Activated naive CD4-positive, alpha-beta T cell treated with anti-CD3 and anti-CD28 coated beads for 36 hours (primary cell): ENCODE measurements at regions of chr1 and their contacts with region 1.

Region 1: GRCh38 chr1:156500797-156501499 is 373 bp upstream of the MEF2D start:
- DNase-seq: peak; percentile 93
- H3K4me3 Mint-ChIP-seq: peak overlapping the region; percentile 89
- H3K27ac Mint-ChIP-seq: peak overlapping the region; percentile 97
- H3K4me1 Mint-ChIP-seq: peaks cover 75% of the 10 kb centered on the region
- H3K27me3 Mint-ChIP-seq: no peaks in the 10 kb centered on the region

Region 2: GRCh38 chr1:156114101-156114916 is 386.6 kb before region 1 on chr1 and contains the start of gene LMNA:
- CTCF ChIA-PET with region 1: no interaction called
- intact Hi-C with region 1: loop called (anchors 2 kb)
- DNase-seq: peak; percentile 91
- H3K4me3 Mint-ChIP-seq: peak within 1 kb of the TSS; percentile 86
- H3K27ac Mint-ChIP-seq: peak within 1 kb of the TSS; percentile 50
- H3K4me1 Mint-ChIP-seq: peaks cover 32% of the 10 kb centered on the region
- H3K27me3 Mint-ChIP-seq: peaks cover 22% of the 10 kb centered on the region
- total RNA-seq, gene LMNA: 62.1 to 62.6 TPM

Region 3: DNA sequence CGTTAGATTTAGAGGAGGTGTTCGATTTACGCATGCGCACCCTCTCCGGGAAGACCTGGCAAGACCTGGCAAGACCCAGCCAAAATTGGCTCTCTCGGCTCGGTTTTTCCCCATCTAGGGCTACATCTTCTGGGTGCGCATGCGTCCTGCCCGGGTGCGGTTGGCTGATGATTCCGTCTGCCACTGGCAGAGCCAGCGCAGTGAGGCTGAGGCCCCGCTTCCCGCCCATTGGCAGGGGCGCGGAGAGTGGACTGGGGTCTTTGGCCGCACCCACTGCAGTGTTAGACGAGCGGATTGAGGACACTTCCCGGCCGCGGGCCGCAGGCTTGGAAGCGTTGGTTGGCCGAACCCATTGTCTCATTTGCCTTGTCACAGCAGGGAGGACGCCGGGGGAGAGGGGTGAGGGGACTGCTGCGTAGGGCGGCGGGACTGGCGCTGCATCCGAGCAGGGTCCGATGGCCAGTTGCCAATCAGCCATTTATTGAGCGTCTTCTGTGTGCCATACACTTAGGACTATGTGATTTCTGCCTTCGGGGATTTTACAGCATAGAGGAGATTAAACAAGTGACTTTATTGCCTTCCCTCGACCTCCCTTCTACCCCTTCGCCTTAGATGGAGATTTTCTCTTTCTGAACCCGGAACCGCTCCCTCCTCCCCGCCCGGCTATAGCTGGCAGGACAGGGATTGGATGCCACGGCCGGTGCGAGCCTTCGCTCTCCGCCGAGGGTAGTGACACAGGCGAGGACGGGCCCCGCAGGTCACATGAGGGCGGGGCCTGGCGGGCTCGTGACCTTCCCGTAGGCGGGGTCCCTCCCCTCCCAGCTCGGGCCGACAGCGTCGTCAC is 44.1 kb before region 1 on chr1:
- CTCF ChIA-PET with region 1: interaction called, 10 read pairs
- intact Hi-C with region 1: loop called (anchors 1 kb)
- DNase-seq: peak; percentile 100
- H3K4me3 Mint-ChIP-seq: peak overlapping the region; percentile 86
- H3K27ac Mint-ChIP-seq: peak overlapping the region; percentile 97
- H3K4me1 Mint-ChIP-seq: peaks cover 10% of the 10 kb centered on the region
- H3K27me3 Mint-ChIP-seq: no peaks in the 10 kb centered on the region

Region 4: DNA sequence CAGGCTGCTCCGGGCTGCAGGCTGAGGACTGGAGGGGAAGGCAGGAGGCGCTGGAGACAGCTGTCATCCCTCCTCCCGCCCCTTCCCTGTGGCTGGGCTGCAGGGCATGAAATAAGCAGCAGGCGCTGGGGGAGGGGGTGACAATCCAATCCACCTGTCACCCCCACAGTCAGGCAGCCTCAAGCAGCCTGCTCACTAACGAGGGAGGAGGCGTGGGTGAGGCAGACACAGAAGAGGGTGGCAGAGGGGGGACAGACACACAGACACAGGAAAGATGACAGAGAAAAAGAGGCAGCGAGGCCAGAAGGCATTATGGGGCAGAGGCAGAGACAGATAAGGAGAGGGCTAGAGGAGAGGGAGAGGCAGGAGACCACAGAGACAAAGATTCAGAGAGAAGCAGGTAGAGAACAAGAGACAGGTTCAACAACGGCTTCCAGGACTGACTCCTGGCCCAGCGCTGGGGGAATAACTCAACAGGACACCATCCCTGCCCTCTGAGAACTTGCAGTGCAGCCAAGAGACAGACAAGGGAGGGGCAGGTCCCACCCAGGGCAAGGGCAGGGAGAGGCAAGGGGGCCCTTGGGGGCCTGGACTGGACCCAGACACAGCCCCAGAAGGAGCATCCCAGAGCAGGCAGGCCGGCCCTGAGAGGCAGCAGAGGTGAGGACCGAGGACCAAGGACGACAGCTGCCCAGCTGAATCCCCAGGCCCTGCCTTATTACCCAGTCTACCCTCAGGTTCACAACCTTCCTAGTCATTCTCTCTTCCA is 11.6 kb before region 1 on chr1:
- CTCF ChIA-PET with region 1: interaction called, 306 read pairs
- intact Hi-C with region 1: loop called (anchors 1 kb)
- DNase-seq: peak; percentile 79
- H3K4me3 Mint-ChIP-seq: peak overlapping the region; percentile 10
- H3K27ac Mint-ChIP-seq: peak overlapping the region; percentile 82
- H3K4me1 Mint-ChIP-seq: peaks cover 81% of the 10 kb centered on the region
- H3K27me3 Mint-ChIP-seq: no peaks in the 10 kb centered on the region

Region 5: GRCh38 chr1:156551866-156552265 is 50.9 kb after region 1 on chr1:
- CTCF ChIA-PET with region 1: no interaction called
- intact Hi-C with region 1: no loop called
- DNase-seq: no peak
- H3K4me3 Mint-ChIP-seq: no peak overlapping the region
- H3K27ac Mint-ChIP-seq: no peak overlapping the region
- H3K4me1 Mint-ChIP-seq: no peaks in the 10 kb centered on the region
- H3K27me3 Mint-ChIP-seq: no peaks in the 10 kb centered on the region

Region 6: DNA sequence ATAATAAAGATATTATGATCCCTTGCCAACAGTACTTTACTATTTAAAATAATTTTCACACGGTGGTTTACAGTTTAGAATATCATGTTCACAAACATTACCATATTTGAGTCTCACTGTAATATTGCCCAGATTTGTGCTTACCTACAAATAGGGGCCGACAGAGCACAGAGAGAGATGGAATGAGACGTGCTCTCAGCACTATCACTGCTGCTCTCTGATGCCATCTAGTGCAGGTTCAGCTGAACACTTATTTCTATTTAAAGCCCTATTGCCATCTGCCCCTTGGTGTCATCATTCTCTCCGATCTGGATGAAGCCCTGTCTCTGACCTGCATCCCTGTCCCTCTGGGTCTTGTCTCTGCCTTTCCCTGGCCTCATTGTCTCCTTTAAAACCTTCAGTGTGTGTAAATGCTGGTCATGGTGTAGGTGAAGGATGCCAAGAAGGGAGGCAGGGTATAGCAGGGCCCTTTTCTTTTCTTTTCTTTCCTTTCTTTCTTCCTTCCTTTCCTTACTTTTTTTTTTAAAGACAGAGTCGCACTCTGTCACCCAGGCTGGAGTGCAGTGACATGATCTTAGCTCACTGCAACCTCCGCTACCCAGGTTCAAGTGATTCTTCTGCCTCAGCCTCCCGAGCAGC is 107.2 kb after region 1 on chr1:
- CTCF ChIA-PET with region 1: interaction called, 10 read pairs
- intact Hi-C with region 1: no loop called
- DNase-seq: peak; percentile 85
- H3K4me3 Mint-ChIP-seq: no peak overlapping the region
- H3K27ac Mint-ChIP-seq: no peak overlapping the region
- H3K4me1 Mint-ChIP-seq: peaks cover 10% of the 10 kb centered on the region
- H3K27me3 Mint-ChIP-seq: peaks cover 2% of the 10 kb centered on the region

Region 7: DNA sequence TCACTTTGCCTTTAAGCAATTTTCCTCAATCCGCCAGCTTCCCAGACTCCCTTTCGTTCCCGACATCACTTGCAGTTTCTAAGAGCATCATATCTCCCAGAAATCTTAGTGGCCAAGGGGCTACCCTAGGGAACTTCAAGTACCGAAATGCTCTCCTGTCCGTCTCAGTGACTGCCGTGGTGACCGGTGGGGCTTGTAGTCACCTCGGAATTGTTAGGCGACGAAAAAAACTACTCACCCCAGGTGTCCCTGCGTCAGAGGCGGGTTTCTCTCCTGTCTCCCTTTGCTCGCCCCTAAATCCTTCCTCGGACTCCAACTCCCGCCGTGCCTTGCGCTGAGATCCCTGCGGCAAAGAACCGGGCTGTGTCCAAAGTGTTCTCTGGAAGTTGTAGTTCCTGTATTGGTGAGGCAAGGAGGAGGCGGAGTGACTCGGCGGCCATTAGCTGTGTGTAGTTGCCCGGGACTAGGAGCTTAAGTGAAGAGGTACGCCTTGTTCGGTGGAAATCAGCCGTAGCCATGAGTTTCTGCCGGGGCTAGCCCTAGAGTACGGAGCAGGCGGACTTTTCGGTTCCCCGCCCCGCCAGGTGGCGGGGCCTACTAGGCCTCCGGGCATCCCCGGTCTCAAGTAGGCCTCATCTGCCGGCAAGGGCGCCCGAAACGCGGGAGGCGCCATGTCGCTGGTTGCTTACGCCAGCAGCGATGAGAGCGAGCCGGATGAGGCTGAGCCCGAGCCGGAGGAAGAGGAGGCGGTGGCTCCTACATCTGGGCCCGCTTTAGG is 266.3 kb after region 1 on chr1 and contains the start of gene PRCC:
- CTCF ChIA-PET with region 1: no interaction called
- intact Hi-C with region 1: loop called (anchors 1 kb)
- DNase-seq: peak; percentile 99
- H3K4me3 Mint-ChIP-seq: no peak within 1 kb of the TSS
- H3K27ac Mint-ChIP-seq: no peak within 1 kb of the TSS
- H3K4me1 Mint-ChIP-seq: peaks cover 39% of the 10 kb centered on the region
- H3K27me3 Mint-ChIP-seq: no peaks in the 10 kb centered on the region
- total RNA-seq, gene PRCC: 55.2 to 55.8 TPM

Region 8: DNA sequence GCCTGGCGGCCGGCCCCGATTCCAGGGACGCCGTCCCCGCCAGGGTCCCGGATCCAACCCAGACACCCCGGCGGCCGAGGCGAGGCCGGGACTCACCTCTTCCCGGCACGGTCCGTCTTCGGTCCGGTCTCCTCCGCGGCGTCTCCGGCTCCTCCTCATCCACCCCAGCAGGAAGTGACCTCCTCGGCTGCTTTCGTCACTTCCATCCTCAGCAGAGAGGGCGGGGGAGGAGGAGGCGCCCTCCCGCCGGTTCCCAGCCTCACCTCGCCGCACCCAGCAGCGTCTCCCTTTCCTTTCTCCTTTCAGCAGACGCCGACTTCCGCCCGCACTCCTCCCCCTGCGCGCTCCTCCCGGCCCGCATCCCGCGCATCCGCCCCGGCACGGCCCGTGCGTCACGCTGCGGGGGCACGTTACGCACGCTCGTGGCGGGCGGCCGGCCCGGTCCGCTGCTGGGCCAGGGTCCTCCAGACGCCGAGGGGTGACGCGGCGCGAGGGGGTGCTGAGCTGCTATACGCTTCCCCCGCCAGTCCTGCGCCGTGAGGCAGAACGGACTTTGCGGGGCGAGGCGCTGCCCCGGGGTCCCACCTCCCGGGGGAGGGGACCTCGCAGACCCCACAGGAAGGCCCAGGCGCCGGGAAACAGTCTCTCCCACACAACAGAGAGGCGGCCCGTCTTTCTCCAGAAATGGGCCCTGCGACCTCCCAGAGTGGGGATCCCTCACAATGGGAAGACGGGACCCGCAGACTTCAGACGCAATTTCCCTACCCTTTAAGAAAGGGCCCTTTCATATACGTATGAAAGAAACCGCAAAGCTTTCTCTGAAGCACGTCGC is 637.5 kb after region 1 on chr1 and contains the start of gene ETV3:
- CTCF ChIA-PET with region 1: no interaction called
- intact Hi-C with region 1: loop called (anchors 10 kb)
- DNase-seq: peak; percentile 95
- H3K4me3 Mint-ChIP-seq: peak within 1 kb of the TSS; percentile 96
- H3K27ac Mint-ChIP-seq: peak within 1 kb of the TSS; percentile 85
- H3K4me1 Mint-ChIP-seq: peaks cover 56% of the 10 kb centered on the region
- H3K27me3 Mint-ChIP-seq: no peaks in the 10 kb centered on the region
- total RNA-seq, gene ETV3: 23.2 to 23.3 TPM